Mammary epithelial cell (primary cell): ENCODE measurements at regions of chr19 and their contacts with region 1.

Region 1: GRCh38 chr19:45405435-45406225 is 761 bp upstream of the PPP1R13L start:
- DNase-seq: peak; percentile 95
- H3K4me3 ChIP-seq: peak overlapping the region; percentile 90 to 92 (median 91)
- H3K27ac ChIP-seq: peak overlapping the region; percentile 94
- H3K4me1 ChIP-seq: peaks cover 26% of the 10 kb centered on the region
- H3K27me3 ChIP-seq: no peaks in the 10 kb centered on the region
- CTCF ChIP-seq: no peak

Region 2: DNA sequence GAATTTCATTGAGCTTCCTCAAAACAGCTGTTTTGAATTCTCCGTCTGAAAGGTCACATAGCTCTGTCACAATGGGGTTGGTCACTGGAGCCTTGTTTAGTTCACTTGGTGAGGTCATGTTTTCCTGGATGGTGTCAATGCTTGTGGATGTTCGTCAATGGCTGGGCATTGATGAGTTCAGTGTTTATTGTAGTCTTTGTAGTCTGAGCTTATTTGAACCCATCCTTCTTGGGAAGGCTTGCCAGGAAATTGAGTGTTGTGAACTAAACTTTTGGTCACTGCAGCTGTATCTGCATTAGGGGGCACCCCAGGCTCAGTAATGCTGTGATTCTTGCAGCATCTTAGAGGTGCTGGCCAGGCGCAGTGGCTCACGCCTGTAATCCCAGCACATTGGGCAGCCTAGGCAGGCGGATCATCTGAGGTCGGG is 205.0 kb before region 1 on chr19:
- CTCF ChIA-PET with region 1: no interaction called
- dilution Hi-C with region 1: no loop called
- in situ Hi-C with region 1: no loop called
- intact Hi-C with region 1: loop called (anchors 10 kb)
- DNase-seq: peak; percentile 30
- H3K4me3 ChIP-seq: no peak overlapping the region
- H3K27ac ChIP-seq: no peak overlapping the region
- H3K4me1 ChIP-seq: no peaks in the 10 kb centered on the region
- H3K27me3 ChIP-seq: no peaks in the 10 kb centered on the region
- CTCF ChIP-seq: peak; percentile 39 to 47

Region 3: GRCh38 chr19:45250832-45251451 is 154.7 kb before region 1 on chr19 and contains the start of gene MARK4:
- CTCF ChIA-PET with region 1: no interaction called
- dilution Hi-C with region 1: no loop called
- in situ Hi-C with region 1: no loop called
- intact Hi-C with region 1: loop called (anchors 5 kb)
- DNase-seq: peak; percentile 61
- H3K4me3 ChIP-seq: peak within 1 kb of the TSS; percentile 64 to 83 (median 76)
- H3K27ac ChIP-seq: peak within 1 kb of the TSS; percentile 48
- H3K4me1 ChIP-seq: peaks cover 31% of the 10 kb centered on the region
- H3K27me3 ChIP-seq: no peaks in the 10 kb centered on the region
- CTCF ChIP-seq: no peak
- total RNA-seq, gene MARK4: 13.3 to 48.9 TPM

Region 4: DNA sequence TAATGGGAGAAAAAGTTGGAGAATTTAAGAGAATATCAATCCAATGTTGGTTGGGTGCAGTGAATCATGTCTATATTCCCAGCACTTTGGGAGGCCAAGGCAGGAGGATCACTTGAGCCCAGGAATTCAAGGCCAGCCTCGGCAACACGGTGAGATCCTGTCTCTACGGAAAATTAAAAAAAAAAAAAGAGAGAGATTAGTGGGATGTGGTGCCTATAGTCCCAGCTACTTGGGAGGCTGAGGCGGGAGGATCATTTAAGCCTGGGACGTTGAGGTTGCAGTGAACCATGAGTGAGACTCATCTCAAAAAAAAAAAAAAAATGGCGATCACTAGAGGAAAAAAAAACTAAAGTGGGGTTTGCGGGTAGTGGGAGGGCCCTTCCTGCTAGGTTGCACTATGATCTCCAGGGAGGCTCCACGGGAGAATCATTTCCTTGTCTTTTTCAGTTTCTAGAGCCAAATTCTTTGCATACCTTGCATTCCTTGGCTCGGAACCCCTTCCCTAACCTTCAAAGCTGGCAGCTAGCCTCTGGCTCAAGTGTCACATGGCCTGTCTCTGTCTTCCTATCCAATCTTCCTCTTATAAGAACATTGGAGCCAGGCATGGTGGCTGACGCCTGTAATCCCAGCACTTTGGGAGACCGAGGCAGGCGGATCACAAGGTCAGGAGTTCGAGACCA is 29.4 kb before region 1 on chr19:
- CTCF ChIA-PET with region 1: no interaction called
- dilution Hi-C with region 1: no loop called
- in situ Hi-C with region 1: no loop called
- intact Hi-C with region 1: loop called (anchors 1 kb)
- DNase-seq: peak; percentile 53
- H3K4me3 ChIP-seq: no peak overlapping the region
- H3K27ac ChIP-seq: peak overlapping the region; percentile 13
- H3K4me1 ChIP-seq: peaks cover 6% of the 10 kb centered on the region
- H3K27me3 ChIP-seq: no peaks in the 10 kb centered on the region
- CTCF ChIP-seq: no peak

Region 5: GRCh38 chr19:45439569-45440254 is 34.1 kb after region 1 on chr19:
- CTCF ChIA-PET with region 1: no interaction called
- dilution Hi-C with region 1: no loop called
- in situ Hi-C with region 1: no loop called
- intact Hi-C with region 1: loop called (anchors 5 kb)
- DNase-seq: peak; percentile 63
- H3K4me3 ChIP-seq: peak overlapping the region; percentile 55 to 58 (median 58)
- H3K27ac ChIP-seq: peak overlapping the region; percentile 61
- H3K4me1 ChIP-seq: peaks cover 14% of the 10 kb centered on the region
- H3K27me3 ChIP-seq: no peaks in the 10 kb centered on the region
- CTCF ChIP-seq: peak; percentile 84 to 88

Region 6: GRCh38 chr19:45478454-45479238 is 73.0 kb after region 1 on chr19:
- CTCF ChIA-PET with region 1: interaction called, 12 read pairs
- dilution Hi-C with region 1: loop called (anchors 5 kb)
- in situ Hi-C with region 1: no loop called
- intact Hi-C with region 1: loop called (anchors 1 kb)
- DNase-seq: peak; percentile 87
- H3K4me3 ChIP-seq: peak overlapping the region; percentile 47 to 58 (median 56)
- H3K27ac ChIP-seq: peak overlapping the region; percentile 99
- H3K4me1 ChIP-seq: peaks cover 5% of the 10 kb centered on the region
- H3K27me3 ChIP-seq: no peaks in the 10 kb centered on the region
- CTCF ChIP-seq: peak; percentile 96 to 98

Region 7: GRCh38 chr19:45547976-45548609 is 142.5 kb after region 1 on chr19:
- CTCF ChIA-PET with region 1: no interaction called
- dilution Hi-C with region 1: no loop called
- in situ Hi-C with region 1: no loop called
- intact Hi-C with region 1: no loop called
- DNase-seq: peak; percentile 94
- H3K4me3 ChIP-seq: no peak overlapping the region
- H3K27ac ChIP-seq: peak overlapping the region; percentile 70
- H3K4me1 ChIP-seq: peaks cover 32% of the 10 kb centered on the region
- H3K27me3 ChIP-seq: no peaks in the 10 kb centered on the region
- CTCF ChIP-seq: no peak

Region 8: GRCh38 chr19:45569619-45570421 is 164.2 kb after region 1 on chr19:
- CTCF ChIA-PET with region 1: no interaction called
- dilution Hi-C with region 1: no loop called
- in situ Hi-C with region 1: no loop called
- intact Hi-C with region 1: loop called (anchors 10 kb)
- DNase-seq: no peak
- H3K4me3 ChIP-seq: no peak overlapping the region
- H3K27ac ChIP-seq: peak overlapping the region; percentile 79
- H3K4me1 ChIP-seq: peaks cover 28% of the 10 kb centered on the region
- H3K27me3 ChIP-seq: no peaks in the 10 kb centered on the region
- CTCF ChIP-seq: peak; percentile 78 to 79